Activated CD4-positive, alpha-beta memory T cell treated with anti-CD3 and anti-CD28 coated beads for 36 hours (primary cell): ENCODE measurements at regions of chr1 and their contacts with region 1.

Region 1: GRCh38 chr1:110746579-110747160 is 71.9 kb upstream of the KCNA3 start:
- DNase-seq: peak; percentile 70
- H3K4me3 Mint-ChIP-seq: no peak overlapping the region
- H3K27ac Mint-ChIP-seq: no peak overlapping the region
- H3K4me1 Mint-ChIP-seq: no peaks in the 10 kb centered on the region
- H3K27me3 Mint-ChIP-seq: peaks cover 15% of the 10 kb centered on the region

Region 2: DNA sequence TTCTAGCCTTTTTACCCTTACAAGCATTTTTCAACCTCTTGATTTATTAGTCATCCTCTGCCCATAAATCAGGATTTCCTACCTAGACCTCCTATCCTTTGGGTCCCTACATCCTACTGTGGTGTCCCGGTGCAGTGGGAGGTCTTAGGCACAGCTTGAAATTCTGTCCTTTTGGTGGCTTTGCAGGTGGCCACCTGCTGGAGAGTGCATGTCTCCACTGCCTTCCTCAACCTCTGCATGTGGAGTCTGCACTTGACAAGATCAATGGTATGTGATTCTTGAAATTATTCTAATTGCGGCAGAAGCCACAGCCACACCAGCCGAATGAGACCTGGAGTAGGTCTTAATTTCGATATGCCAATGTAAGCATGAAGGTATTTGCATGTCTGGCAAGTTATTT is 60.5 kb before region 1 on chr1:
- CTCF ChIA-PET with region 1: no interaction called
- POLR2A ChIA-PET with region 1: interaction called, 3 read pairs
- intact Hi-C with region 1: loop called (anchors 5 kb)
- DNase-seq: peak; percentile 31
- H3K4me3 Mint-ChIP-seq: no peak overlapping the region
- H3K27ac Mint-ChIP-seq: no peak overlapping the region
- H3K4me1 Mint-ChIP-seq: peaks cover 15% of the 10 kb centered on the region
- H3K27me3 Mint-ChIP-seq: no peaks in the 10 kb centered on the region

Region 3: GRCh38 chr1:110726755-110727154 is 19.9 kb before region 1 on chr1:
- CTCF ChIA-PET with region 1: no interaction called
- POLR2A ChIA-PET with region 1: no interaction called
- intact Hi-C with region 1: loop called (anchors 2 kb)
- DNase-seq: no peak
- H3K4me3 Mint-ChIP-seq: peak overlapping the region; percentile 21
- H3K27ac Mint-ChIP-seq: no peak overlapping the region
- H3K4me1 Mint-ChIP-seq: peaks cover 30% of the 10 kb centered on the region
- H3K27me3 Mint-ChIP-seq: no peaks in the 10 kb centered on the region